Activated T-helper 1 cell treated with anti-CD3 and anti-CD28 coated beads, Interleukin-12 subunit alpha, Interleukin-12 subunit beta, Interleukin-2, Interleukin-4 antibody, amounts not matched to agents 30 ng/mL and 10 ng/mL and 1 ng/mL, durations not matched to agents 14 hours and 24 hours and 36 hours (primary cell): ENCODE measurements at regions of chr1 and their contacts with region 1.

Region 1: GRCh38 chr1:206556750-206557635 is 49.7 kb downstream of the RASSF5 start:
- DNase-seq: peak; percentile 86
- H3K4me3 Mint-ChIP-seq: peak overlapping the region; percentile 98
- H3K27ac Mint-ChIP-seq: peak overlapping the region; percentile 98
- H3K4me1 Mint-ChIP-seq: peaks cover 73% of the 10 kb centered on the region
- H3K27me3 Mint-ChIP-seq: no peaks in the 10 kb centered on the region

Region 2: GRCh38 chr1:206479183-206480125 is 77.5 kb before region 1 on chr1:
- intact Hi-C with region 1: no loop called
- DNase-seq: peak; percentile 25
- H3K4me3 Mint-ChIP-seq: no peak overlapping the region
- H3K27ac Mint-ChIP-seq: peak overlapping the region; percentile 85
- H3K4me1 Mint-ChIP-seq: peaks cover 31% of the 10 kb centered on the region
- H3K27me3 Mint-ChIP-seq: no peaks in the 10 kb centered on the region

Region 3: GRCh38 chr1:206507284-206508129 is 49.5 kb before region 1 on chr1 and contains the start of gene RASSF5:
- intact Hi-C with region 1: loop called (anchors 2 kb)
- DNase-seq: peak; percentile 82
- H3K4me3 Mint-ChIP-seq: peak within 1 kb of the TSS; percentile 78
- H3K27ac Mint-ChIP-seq: peak within 1 kb of the TSS; percentile 47
- H3K4me1 Mint-ChIP-seq: peaks cover 54% of the 10 kb centered on the region
- H3K27me3 Mint-ChIP-seq: peaks cover 17% of the 10 kb centered on the region
- total RNA-seq, gene RASSF5: 220 and 221 TPM in 2 replicates

Region 4: GRCh38 chr1:206583707-206584648 is 27.0 kb after region 1 on chr1:
- intact Hi-C with region 1: loop called (anchors 1 kb)
- DNase-seq: peak; percentile 70
- H3K4me3 Mint-ChIP-seq: peak overlapping the region; percentile 85
- H3K27ac Mint-ChIP-seq: peak overlapping the region; percentile 100
- H3K4me1 Mint-ChIP-seq: peaks cover 95% of the 10 kb centered on the region
- H3K27me3 Mint-ChIP-seq: no peaks in the 10 kb centered on the region

Region 5: GRCh38 chr1:206635080-206635977 is 78.3 kb after region 1 on chr1 and contains the start of gene DYRK3:
- intact Hi-C with region 1: loop called (anchors 1 kb)
- DNase-seq: peak; percentile 95
- H3K4me3 Mint-ChIP-seq: peak within 1 kb of the TSS; percentile 89
- H3K27ac Mint-ChIP-seq: peak within 1 kb of the TSS; percentile 95
- H3K4me1 Mint-ChIP-seq: peaks cover 38% of the 10 kb centered on the region
- H3K27me3 Mint-ChIP-seq: peaks cover 7% of the 10 kb centered on the region
- total RNA-seq, gene DYRK3: 22.1 and 23.3 TPM in 2 replicates